Motor neuron (in vitro differentiated cells): ENCODE measurements at regions of chr1 and their contacts with region 1.

Region 1: DNA sequence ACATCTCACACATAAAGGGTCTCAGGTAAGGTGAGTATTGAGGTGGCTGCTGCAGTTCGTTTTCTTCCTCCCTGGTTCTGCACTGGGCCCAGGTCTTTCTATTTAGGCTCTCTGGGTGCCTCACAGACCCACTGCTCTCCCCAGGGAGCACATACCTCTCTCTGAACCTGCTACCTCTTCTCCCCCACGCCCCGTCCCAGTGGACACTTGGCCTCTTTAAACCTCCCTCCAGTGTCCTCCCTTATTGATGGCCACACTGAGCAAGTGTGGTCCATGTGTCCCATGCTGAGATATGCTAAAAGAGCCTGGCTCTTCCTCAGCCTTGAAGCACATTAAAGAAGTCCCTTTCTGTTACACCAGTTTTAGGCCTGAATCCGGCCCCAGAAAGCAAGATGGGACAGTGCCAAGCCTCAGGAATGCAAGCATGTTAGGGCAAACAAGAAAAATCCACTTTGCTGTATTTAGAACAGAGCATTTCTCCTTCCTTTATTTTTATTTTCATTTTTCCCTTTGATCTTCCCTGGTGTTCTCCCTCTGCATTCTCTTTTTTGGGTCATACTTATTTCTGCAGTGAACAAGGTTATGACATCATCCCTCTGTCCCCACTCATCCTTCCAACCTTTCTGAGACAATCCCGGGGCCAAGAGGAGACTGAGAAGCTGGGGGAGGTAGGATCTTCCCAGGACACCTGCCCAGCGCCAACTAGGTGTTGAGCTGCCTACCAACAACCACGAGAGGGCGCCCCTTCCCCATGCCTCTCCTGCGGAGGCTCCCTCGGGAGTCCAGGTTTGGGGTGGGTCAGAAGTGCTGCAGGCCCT is 5.0 kb upstream of the CHI3L2 start:
- ATAC-seq: peak; percentile 89 to 98 (median 96)
- H3K4me3 ChIP-seq: no peak overlapping the region
- H3K27ac ChIP-seq: no peak overlapping the region
- H3K4me1 ChIP-seq: peaks cover 0 to 7% of the 10 kb centered on the region in 2 donors

Region 2: DNA sequence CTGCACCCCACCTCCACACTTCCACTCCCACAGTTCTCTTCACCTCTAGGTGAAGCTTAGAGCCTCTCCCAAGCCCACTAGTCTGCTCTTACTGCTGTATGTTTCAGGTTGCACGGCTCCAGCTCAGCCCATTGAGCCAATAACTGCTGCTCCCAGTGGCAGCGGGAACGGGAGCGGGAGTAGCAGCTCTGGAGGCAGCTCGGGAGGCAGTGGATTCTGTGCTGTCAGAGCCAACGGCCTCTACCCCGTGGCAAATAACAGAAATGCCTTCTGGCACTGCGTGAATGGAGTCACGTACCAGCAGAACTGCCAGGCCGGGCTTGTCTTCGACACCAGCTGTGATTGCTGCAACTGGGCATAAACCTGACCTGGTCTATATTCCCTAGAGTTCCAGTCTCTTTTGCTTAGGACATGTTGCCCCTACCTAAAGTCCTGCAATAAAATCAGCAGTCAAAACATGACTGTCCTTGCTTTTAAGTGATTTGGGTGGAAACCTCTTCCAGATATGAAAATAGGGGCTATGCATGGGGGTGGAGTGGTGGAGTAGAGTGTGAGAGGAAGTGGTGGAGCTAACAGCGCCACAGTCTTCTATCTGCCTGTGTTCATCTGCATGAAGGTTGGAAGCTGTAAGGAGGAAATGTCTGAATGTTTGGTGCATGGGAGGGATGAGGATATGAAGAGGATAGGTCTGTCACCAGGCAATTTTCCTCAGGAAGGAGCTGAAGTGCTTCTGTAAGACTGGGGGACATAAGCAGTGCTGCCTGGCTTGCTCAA is 97.8 kb after region 1 on chr1:
- in situ Hi-C with region 1: loop called in 1 of 9 experiments (anchors 10 kb)
- ATAC-seq: peak in 1 of 8 experiments; percentile 15
- H3K4me3 ChIP-seq: no peak overlapping the region
- H3K27ac ChIP-seq: no peak overlapping the region
- H3K4me1 ChIP-seq: no peaks in the 10 kb centered on the region

Region 3: GRCh38 chr1:111399792-111400610 is 177.5 kb after region 1 on chr1:
- in situ Hi-C with region 1: loop called in 6 of 9 experiments (anchors 10 to 25 kb)
- ATAC-seq: peak in 2 of 8 experiments; percentile 22 to 42
- H3K4me3 ChIP-seq: no peak overlapping the region
- H3K27ac ChIP-seq: no peak overlapping the region
- H3K4me1 ChIP-seq: no peaks in the 10 kb centered on the region

Region 4: GRCh38 chr1:111755331-111756123 is 533.0 kb after region 1 on chr1 and contains the start of gene DDX20:
- in situ Hi-C with region 1: loop called in 2 of 9 experiments (anchors 25 kb)
- ATAC-seq: peak; percentile 82 to 91 (median 89)
- H3K4me3 ChIP-seq: peak within 1 kb of the TSS; percentile 71 to 95 (median 88)
- H3K27ac ChIP-seq: peak within 1 kb of the TSS; percentile 95 to 96
- H3K4me1 ChIP-seq: peaks cover 15 to 19% of the 10 kb centered on the region in 2 donors
- total RNA-seq, gene DDX20: 8.6 to 26.1 (median 14.9) TPM

Region 5: GRCh38 chr1:112011215-112011614 is 788.7 kb after region 1 on chr1:
- in situ Hi-C with region 1: no loop called
- ATAC-seq: peak in 7 of 8 experiments; percentile 21 to 99 (median 65)
- H3K4me3 ChIP-seq: no peak overlapping the region
- H3K27ac ChIP-seq: no peak overlapping the region
- H3K4me1 ChIP-seq: peaks cover 7 to 9% of the 10 kb centered on the region in 2 donors